H1 (cell line): ENCODE measurements at regions of chr17 and their contacts with region 1.

Region 1: GRCh38 chr17:63834431-63835166 is 7.1 kb upstream of the FTSJ3 start:
- DNase-seq: peak; percentile 54 to 70
- H3K4me3 ChIP-seq: no peak overlapping the region
- H3K27ac ChIP-seq: no peak overlapping the region
- H3K4me1 ChIP-seq: peaks cover 3 to 20% (median 16%) of the 10 kb centered on the region in 4 experiments
- H3K27me3 ChIP-seq: no peaks in the 10 kb centered on the region
- CTCF ChIP-seq: peak; percentile 74 to 98 (median 85)
- EP300 ChIP-seq: no peak
- POLR2A ChIP-seq: no peak
- RAD21 ChIP-seq: peak; percentile 30 to 52; a peak in 3 of 4 replicates

Region 2: DNA sequence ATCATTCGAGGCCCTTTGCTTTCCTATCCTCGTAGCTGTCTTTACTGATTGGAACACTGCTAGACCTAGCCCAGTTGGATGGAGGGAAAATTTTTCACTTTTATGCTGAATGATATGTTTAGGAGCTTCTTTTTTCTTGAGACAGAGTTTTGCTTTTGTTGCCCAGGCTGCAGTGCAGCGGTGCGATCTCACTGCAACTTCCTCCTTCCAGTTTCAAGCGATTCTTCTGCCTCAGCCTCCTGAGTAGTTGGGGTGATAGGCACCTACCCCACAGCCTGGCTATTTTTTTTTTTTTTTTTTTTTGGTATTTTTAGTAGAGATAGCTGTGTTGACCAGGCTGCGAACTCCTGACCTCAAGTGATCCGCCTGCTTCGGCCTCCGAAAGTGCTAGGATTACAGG is 24.6 kb before region 1 on chr17:
- CTCF ChIA-PET with region 1: interaction called, 18 read pairs
- POLR2A ChIA-PET with region 1: interaction called, 593 read pairs
- DNase-seq: no peak
- H3K4me3 ChIP-seq: no peak overlapping the region
- H3K27ac ChIP-seq: no peak overlapping the region
- H3K4me1 ChIP-seq: no peaks in the 10 kb centered on the region
- H3K27me3 ChIP-seq: no peaks in the 10 kb centered on the region
- CTCF ChIP-seq: no peak
- EP300 ChIP-seq: no peak
- POLR2A ChIP-seq: no peak
- RAD21 ChIP-seq: no peak

Region 3: GRCh38 chr17:63819585-63820537 is 14.7 kb before region 1 on chr17:
- CTCF ChIA-PET with region 1: interaction called, 61 read pairs
- POLR2A ChIA-PET with region 1: interaction called, 593 read pairs
- DNase-seq: peak in 1 of 2 experiments; percentile 35
- H3K4me3 ChIP-seq: no peak overlapping the region
- H3K27ac ChIP-seq: no peak overlapping the region
- H3K4me1 ChIP-seq: no peaks in the 10 kb centered on the region
- H3K27me3 ChIP-seq: no peaks in the 10 kb centered on the region
- CTCF ChIP-seq: no peak
- EP300 ChIP-seq: no peak
- POLR2A ChIP-seq: peak; percentile 10 to 61; a peak in 2 of 3 replicates
- RAD21 ChIP-seq: no peak

Region 4: DNA sequence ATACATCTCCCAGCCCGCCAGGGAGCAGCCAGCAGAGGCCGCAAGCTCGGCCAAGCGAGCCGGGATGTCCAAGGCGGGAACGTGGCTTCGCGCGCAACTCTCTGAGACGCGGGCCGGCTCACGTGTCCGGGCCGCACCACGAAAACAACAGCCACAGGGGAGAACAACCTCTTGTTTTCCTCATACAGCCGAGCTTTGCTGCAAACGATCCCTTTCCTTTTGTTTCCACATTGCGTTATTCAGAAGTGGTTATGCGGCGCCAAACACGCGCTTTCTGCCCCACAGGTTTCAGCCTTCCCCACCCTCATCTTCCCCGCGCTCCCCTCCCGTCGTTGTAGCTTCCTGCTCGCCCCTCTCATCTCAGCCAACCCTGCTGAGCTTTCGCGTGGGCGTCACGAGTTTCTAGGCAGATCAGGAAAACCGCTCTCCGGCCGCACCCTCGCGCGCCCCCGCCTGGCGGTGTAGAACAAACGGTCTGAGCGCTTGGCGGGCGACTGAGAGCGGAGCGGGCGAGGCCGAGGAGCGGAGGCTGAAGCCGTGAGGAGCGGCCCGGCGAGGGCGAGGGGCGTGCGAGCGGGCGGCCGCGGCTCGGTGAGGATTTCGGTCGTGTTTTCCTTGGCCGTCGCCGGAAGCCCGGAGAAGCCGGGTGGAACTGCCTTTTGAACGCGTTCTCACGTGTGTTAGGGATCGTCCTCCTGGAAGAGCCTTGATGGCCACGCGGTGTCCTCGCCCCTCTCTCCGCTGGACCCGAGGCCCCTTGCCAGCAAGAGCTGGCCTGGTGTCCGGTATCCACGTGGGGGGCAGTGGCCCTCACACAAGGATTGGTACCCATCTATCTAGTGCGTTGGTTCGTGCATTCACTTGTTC is 14.5 kb after region 1 on chr17:
- CTCF ChIA-PET with region 1: interaction called, 8 read pairs
- POLR2A ChIA-PET with region 1: interaction called, 593 read pairs
- DNase-seq: peak; percentile 81 to 100
- H3K4me3 ChIP-seq: peak overlapping the region in 3 of 4 experiments; percentile 16 to 39 (median 25); a peak in 5 of 8 replicates
- H3K27ac ChIP-seq: peak overlapping the region; percentile 76; the same call in 1 of the 2 replicates
- H3K4me1 ChIP-seq: no peaks in the 10 kb centered on the region
- H3K27me3 ChIP-seq: peaks cover 0 to 29% (median 25%) of the 10 kb centered on the region in 4 experiments; a peak in 6 of 7 replicates
- CTCF ChIP-seq: peak; percentile 59 to 84 (median 75)
- EP300 ChIP-seq: peak in 1 of 2 experiments; percentile 99; a peak in 1 of 3 replicates
- POLR2A ChIP-seq: no peak
- RAD21 ChIP-seq: 0 out of 4 replicates have a peak, but pooled peaks of 1 of the 2 experiments have one; percentile 6

Region 5: DNA sequence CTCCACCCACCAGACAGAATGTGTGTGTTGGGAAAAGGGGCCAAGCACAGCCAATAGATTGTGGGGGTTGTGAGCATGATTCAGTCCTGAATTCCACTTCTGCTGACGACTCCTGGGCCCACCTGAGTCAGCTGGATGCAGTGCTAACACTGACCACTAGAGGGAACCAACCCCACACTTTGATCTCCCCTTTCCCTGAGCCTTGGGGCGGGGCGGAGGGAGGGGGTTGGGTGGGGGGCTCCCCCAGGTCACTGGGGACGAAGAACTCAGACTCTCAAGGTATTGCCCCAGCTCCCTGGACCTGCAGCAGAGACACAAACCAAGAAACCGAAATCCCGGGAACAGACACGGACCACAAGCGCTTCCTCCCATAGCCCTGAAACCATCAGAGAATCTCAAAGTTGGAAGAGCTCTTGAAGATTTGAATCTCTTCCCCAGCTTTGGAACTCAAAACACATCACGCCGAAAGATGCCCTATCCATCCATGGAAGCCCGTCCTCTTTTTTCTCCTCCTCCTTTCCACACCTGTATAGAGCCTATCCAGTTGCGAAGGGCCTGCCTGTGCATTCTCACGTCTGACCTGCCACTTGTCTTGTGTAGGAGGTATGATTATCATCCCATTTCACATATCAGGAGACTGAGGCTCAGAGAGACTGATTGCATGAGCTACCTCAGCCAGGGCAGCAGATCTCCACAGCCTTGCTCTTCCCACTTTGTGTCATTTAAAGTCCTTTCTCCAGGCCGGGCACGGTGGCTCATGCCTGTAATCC is 77.2 kb after region 1 on chr17:
- CTCF ChIA-PET with region 1: no interaction called
- POLR2A ChIA-PET with region 1: no interaction called
- DNase-seq: peak in 1 of 2 experiments; percentile 87
- H3K4me3 ChIP-seq: no peak overlapping the region
- H3K27ac ChIP-seq: no peak overlapping the region
- H3K4me1 ChIP-seq: peaks cover 0 to 2% (median under 1%) of the 10 kb centered on the region in 4 experiments; a peak in 2 of 7 replicates
- H3K27me3 ChIP-seq: no peaks in the 10 kb centered on the region
- CTCF ChIP-seq: peak; percentile 63 to 83 (median 69)
- EP300 ChIP-seq: no peak
- POLR2A ChIP-seq: no peak
- RAD21 ChIP-seq: peak; percentile 62 to 65